T-cell (primary cell): ENCODE measurements at regions of chr10 and their contacts with region 1.

Region 1: GRCh38 chr10:69061305-69062161 is 26.4 kb upstream of the SRGN start:
- DNase-seq: peak in 25 of 35 experiments; percentile 18 to 60 (median 28)
- ATAC-seq: peak; percentile 83 to 93 (median 92)
- H3K4me3 ChIP-seq: peak overlapping the region; percentile 22 to 56
- H3K4me3 Mint-ChIP-seq: peak overlapping the region; percentile 65 to 75 (median 72)
- H3K27ac ChIP-seq: peak overlapping the region; percentile 42
- H3K27ac Mint-ChIP-seq: peak overlapping the region; percentile 92 to 95
- H3K4me1 ChIP-seq: peaks cover 7 to 33% of the 10 kb centered on the region in 2 experiments
- H3K4me1 Mint-ChIP-seq: peaks cover 37 to 48% (median 45%) of the 10 kb centered on the region in 3 donors
- H3K27me3 ChIP-seq: no peaks in the 10 kb centered on the region
- H3K27me3 Mint-ChIP-seq: no peaks in the 10 kb centered on the region

Region 2: DNA sequence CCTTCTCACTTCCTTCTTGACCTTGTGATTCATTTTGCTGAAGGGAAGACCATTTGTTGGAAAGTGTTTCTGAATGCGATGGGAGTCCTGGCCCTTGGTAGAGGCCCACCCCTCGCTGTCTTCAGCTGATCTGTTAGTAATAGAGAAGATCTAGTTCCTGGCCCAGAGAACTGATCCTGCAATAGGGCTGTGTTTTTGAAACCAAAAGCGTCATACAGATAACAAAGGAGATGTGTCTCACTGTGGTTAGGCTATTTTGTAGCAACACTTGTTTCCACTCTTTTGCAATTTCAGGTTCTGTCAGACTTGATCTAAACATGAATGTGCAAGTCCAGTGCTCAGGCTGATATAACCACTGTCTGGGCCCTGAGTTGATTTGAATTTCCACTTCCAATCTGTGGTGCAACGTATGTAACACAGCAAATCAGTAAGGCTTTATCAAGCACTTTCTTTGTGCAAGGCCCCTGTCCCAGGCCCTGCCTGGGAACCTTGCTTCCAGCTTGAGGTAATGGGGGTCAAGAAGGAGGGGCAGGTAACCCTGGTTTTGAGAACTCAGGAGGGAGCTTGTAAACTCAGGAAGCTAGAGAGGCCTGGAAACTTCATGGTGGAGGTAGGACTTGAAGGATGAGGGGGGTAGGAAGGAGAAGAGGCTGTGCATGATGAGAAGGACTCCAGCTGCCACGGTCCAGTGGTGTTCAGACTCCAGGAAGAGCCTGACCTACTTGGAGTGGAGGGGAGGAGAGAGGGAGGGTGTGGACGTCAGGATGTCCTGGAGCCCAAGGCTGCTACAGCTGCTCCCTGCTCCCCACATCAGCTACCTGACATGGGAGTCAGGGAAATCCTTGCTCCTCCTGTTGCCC is 15.9 kb before region 1 on chr10:
- CTCF ChIA-PET with region 1: interaction called in 1 of 2 experiments, 12 read pairs
- POLR2A ChIA-PET with region 1: interaction called in 1 of 2 experiments, 4 read pairs
- DNase-seq: peak in 21 of 35 experiments; percentile 7 to 66 (median 30)
- ATAC-seq: peak; percentile 71 to 87 (median 78)
- H3K4me3 ChIP-seq: no peak overlapping the region
- H3K4me3 Mint-ChIP-seq: peak overlapping the region; percentile 42 to 63 (median 46)
- H3K27ac ChIP-seq: peak overlapping the region; percentile 93
- H3K27ac Mint-ChIP-seq: peak overlapping the region; percentile 96 to 98
- H3K4me1 ChIP-seq: peaks cover 8 to 46% of the 10 kb centered on the region in 2 experiments
- H3K4me1 Mint-ChIP-seq: peaks cover 24 to 46% (median 34%) of the 10 kb centered on the region in 3 donors
- H3K27me3 ChIP-seq: no peaks in the 10 kb centered on the region
- H3K27me3 Mint-ChIP-seq: no peaks in the 10 kb centered on the region